ENCODE measurements at regions of chr4 and their contacts with region 1.

Region 1: DNA sequence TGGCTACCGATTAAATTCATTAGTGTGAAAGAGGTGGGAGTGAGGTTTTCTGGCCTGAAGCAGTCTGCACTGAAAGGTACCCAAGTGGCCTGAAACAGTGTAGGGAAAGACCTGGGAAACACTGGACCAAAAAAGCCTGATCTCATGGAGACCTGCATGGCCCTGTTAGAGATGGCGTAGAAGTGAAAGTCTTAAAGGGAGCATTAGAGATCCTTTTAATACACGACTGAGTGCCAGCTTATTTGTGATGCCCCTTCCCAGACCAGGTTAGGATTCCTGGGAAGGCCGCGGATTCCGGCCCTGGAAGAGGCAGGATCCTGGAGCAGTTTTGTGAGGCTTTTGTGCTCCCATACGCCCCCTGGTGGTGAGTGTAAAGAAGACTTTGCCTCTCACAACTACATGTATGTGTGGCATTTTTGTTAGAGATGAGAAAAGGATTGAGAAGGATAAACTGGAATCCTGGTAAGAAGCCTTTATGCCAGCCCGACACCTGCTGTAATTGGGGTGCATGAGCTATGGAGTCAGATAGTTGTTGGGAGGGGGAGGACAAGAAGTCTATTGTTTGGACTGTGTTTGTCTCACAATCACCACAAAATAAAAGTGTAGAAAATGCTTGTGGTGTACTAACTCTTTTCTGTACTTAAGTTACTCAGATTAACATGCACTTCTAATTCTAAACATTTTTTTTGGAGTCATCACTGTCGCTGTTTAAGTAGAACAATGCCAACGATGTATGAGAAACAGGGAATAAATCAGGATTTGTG is 54.0 kb downstream of the JADE1 start:
- DNase-seq: peak; percentile 65
- H3K4me3 ChIP-seq: no peak overlapping the region
- H3K27ac ChIP-seq: no peak overlapping the region
- H3K4me1 ChIP-seq: no peaks in the 10 kb centered on the region
- H3K27me3 ChIP-seq: no peaks in the 10 kb centered on the region
- CTCF ChIP-seq: peak; percentile 82 to 99 (median 86)
- POLR2A ChIP-seq: no peak

Region 2: GRCh38 chr4:128191115-128191781 is 672.2 kb before region 1 on chr4:
- intact Hi-C with region 1: loop called (anchors 2 kb)
- DNase-seq: peak; percentile 61
- H3K4me3 ChIP-seq: no peak overlapping the region
- H3K27ac ChIP-seq: no peak overlapping the region
- H3K4me1 ChIP-seq: no peaks in the 10 kb centered on the region
- H3K27me3 ChIP-seq: no peaks in the 10 kb centered on the region
- CTCF ChIP-seq: peak; percentile 41 to 82 (median 78)
- POLR2A ChIP-seq: no peak

Region 3: GRCh38 chr4:128379860-128380259 is 483.6 kb before region 1 on chr4:
- intact Hi-C with region 1: loop called (anchors 10 kb)
- DNase-seq: no peak
- H3K4me3 ChIP-seq: no peak overlapping the region
- H3K27ac ChIP-seq: no peak overlapping the region
- H3K4me1 ChIP-seq: no peaks in the 10 kb centered on the region
- H3K27me3 ChIP-seq: no peaks in the 10 kb centered on the region
- CTCF ChIP-seq: peak in 3 of 4 experiments; percentile 34 to 47 (median 36)
- POLR2A ChIP-seq: no peak

Region 4: DNA sequence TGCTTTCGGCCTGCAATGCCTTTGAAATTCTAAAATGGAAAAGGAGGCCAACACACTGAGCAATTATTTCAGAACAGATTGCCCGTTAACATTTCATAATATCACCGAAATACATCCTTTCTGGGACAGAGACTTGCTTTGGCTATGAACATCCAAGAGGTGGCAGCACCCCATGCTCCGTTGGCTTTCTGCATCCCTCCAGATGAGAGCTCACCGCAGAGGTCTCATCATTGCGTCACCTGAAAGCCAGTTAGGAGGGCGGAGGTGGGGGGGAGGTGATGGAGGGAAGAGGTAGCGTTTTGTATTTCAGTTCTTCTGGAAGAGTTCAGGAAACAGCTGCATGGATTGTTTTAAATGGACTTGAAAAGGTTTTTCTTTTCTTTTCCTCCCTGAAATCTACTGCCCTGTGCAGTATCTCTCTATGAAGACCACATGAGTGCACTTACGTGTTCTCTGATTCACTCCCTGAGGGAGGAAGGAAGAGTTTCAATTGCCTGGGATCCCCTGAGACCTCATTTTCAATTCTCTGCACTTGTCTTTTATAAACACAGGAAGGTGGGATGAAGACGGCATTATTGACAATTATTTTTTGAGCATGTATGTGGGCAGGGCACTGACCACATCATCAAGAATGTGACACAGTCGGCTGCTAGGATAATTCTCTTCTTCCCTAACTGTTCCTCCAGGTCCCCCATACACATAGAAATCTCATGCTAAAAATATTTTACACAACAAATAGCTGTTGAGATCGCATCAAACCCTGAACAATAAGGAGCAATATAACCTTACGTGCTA is 409.0 kb before region 1 on chr4:
- intact Hi-C with region 1: loop called (anchors 5 kb)
- DNase-seq: peak; percentile 78
- H3K4me3 ChIP-seq: no peak overlapping the region
- H3K27ac ChIP-seq: no peak overlapping the region
- H3K4me1 ChIP-seq: no peaks in the 10 kb centered on the region
- H3K27me3 ChIP-seq: no peaks in the 10 kb centered on the region
- CTCF ChIP-seq: peak; percentile 35 to 84 (median 71)
- POLR2A ChIP-seq: no peak

Region 5: DNA sequence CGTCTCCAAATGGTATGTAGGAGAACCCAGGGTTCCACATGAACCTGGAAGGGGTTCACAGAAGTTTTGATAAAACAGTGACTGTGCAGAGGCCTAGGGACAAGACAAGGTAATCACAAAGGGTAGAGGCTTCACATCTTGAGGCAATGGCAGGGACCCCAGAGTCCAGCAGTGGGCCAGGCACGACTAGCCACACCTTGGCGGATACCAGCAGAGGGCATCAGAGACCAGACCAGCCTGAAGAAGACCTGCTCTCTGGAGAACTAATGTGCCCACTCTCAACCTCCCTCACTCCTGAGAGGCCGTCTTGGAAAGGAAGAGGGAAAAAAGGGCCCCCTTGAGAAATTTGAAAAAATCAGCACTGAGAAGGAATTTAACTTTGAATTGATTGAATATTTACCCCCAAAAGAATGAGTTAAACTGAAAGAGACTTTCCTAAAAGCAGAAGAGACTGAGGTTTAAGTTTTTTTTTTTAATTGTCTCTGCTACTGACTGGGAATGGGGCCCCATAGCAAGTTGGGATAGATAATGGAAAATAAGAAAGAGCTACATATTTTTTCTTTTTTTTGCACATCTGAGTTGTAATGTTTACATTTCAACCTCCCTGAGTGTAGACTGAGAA is 297.8 kb before region 1 on chr4:
- intact Hi-C with region 1: loop called (anchors 2 kb)
- DNase-seq: no peak
- H3K4me3 ChIP-seq: no peak overlapping the region
- H3K27ac ChIP-seq: no peak overlapping the region
- H3K4me1 ChIP-seq: no peaks in the 10 kb centered on the region
- H3K27me3 ChIP-seq: no peaks in the 10 kb centered on the region
- CTCF ChIP-seq: peak; percentile 16 to 54 (median 44)
- POLR2A ChIP-seq: no peak

Region 6: DNA sequence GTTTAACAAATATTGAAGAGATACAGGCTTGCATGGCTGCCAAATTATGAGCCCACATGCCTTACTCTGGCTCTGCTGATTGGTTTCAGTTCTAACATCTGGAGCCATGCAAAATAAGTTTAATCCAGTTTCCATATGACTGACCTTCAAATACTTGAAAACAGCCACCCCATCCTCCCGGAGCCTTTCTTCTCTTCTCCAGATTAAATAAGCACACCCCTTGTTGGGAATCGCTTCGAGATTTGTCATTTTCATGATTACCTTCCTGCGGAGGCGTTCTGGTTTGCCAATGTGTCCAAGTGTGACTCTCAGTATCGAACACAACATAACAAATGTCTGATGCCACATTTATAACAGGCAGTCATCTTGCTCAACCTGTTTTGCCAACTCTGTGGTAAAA is 155.6 kb before region 1 on chr4:
- intact Hi-C with region 1: no loop called
- DNase-seq: no peak
- H3K4me3 ChIP-seq: no peak overlapping the region
- H3K27ac ChIP-seq: no peak overlapping the region
- H3K4me1 ChIP-seq: no peaks in the 10 kb centered on the region
- H3K27me3 ChIP-seq: no peaks in the 10 kb centered on the region
- CTCF ChIP-seq: no peak
- POLR2A ChIP-seq: no peak